ENCODE measurements at regions of chr15 and their contacts with region 1.

Region 1: GRCh38 chr15:64651573-64652260 is 123.7 kb downstream of the RBPMS2 start:
- DNase-seq: peak in 2 of 3 donors; percentile 13 to 32
- H3K4me3 ChIP-seq: no peak overlapping the region
- H3K27ac ChIP-seq: peak overlapping the region in 1 of 2 experiments; percentile 64
- H3K4me1 ChIP-seq: peaks cover 0 to 17% (median 3%) of the 10 kb centered on the region in 4 experiments
- H3K27me3 ChIP-seq: no peaks in the 10 kb centered on the region

Region 2: GRCh38 chr15:64263567-64263966 is 388.1 kb before region 1 on chr15:
- CTCF ChIA-PET with region 1: no interaction called
- POLR2A ChIA-PET with region 1: no interaction called
- DNase-seq: peak in 2 of 3 donors; percentile 53 to 58
- H3K4me3 ChIP-seq: no peak overlapping the region
- H3K27ac ChIP-seq: no peak overlapping the region
- H3K4me1 ChIP-seq: peaks cover 0 to 4% (median 0%) of the 10 kb centered on the region in 4 experiments
- H3K27me3 ChIP-seq: no peaks in the 10 kb centered on the region

Region 3: GRCh38 chr15:64423970-64424369 is 227.7 kb before region 1 on chr15:
- CTCF ChIA-PET with region 1: interaction called, 26 read pairs
- POLR2A ChIA-PET with region 1: no interaction called
- DNase-seq: no peak
- H3K4me3 ChIP-seq: no peak overlapping the region
- H3K27ac ChIP-seq: no peak overlapping the region
- H3K4me1 ChIP-seq: peaks cover 6 to 19% (median 14%) of the 10 kb centered on the region in 4 experiments
- H3K27me3 ChIP-seq: no peaks in the 10 kb centered on the region

Region 4: GRCh38 chr15:64430000-64430735 is 221.5 kb before region 1 on chr15:
- CTCF ChIA-PET with region 1: interaction called, 26 read pairs
- POLR2A ChIA-PET with region 1: no interaction called
- DNase-seq: peak; percentile 91 to 99 (median 97)
- H3K4me3 ChIP-seq: peak overlapping the region in 5 of 7 experiments; percentile 6 to 59 (median 42)
- H3K27ac ChIP-seq: peak overlapping the region; percentile 46 to 73
- H3K4me1 ChIP-seq: peaks cover 18 to 41% (median 37%) of the 10 kb centered on the region in 4 experiments
- H3K27me3 ChIP-seq: no peaks in the 10 kb centered on the region

Region 5: DNA sequence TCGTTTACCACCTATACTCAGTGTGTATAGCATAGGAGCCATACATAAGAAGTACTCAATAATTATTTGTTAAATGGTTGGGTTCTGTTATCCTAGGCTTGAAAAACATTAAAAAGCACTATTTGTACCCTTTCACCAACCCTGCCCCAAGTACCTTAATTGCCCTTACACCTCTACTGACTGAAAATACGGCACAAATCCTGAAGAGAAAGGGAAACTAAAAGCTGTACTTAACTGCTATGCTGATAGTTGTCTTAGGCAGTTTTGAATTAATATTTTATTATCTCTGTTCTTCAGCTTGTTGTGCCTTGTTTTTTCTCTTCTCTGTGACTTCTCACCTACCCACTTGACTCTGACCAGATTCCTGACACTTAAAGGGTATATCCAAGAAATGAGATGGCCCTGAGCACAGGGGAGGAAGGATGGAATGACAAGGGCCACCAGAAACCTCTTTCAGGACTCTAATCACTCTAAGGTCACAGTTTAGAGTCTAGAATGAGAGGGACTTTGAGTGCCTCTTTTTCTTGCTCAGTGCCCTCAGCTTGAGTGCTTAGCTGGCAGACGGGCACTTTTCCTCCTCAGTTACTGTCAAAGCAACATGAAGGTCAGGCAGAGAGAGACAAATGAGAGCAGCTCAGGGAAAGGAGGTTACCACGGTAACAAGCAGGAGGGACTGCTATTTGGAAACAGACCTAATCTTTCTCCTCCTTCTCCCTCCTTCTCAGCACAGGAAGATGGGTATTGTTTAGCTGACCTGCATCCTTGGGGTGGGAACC is 54.8 kb before region 1 on chr15:
- CTCF ChIA-PET with region 1: interaction called, 11 read pairs
- POLR2A ChIA-PET with region 1: no interaction called
- DNase-seq: peak; percentile 34 to 74 (median 67)
- H3K4me3 ChIP-seq: peak overlapping the region in 5 of 7 experiments; percentile 34 to 62 (median 46)
- H3K27ac ChIP-seq: peak overlapping the region; percentile 34 to 85
- H3K4me1 ChIP-seq: peaks cover 3 to 29% (median 13%) of the 10 kb centered on the region in 4 experiments
- H3K27me3 ChIP-seq: no peaks in the 10 kb centered on the region